Ovary (tissue), 10 donors: ENCODE measurements at regions of chr2 and their contacts with region 1.

Region 1: GRCh38 chr2:131673392-131674173 is 145.9 kb downstream of the CCDC74A start:
- DNase-seq: peak; percentile 66 to 83 (median 76)
- H3K4me3 ChIP-seq: peak overlapping the region; percentile 28
- H3K27ac ChIP-seq: no peak overlapping the region
- H3K4me1 ChIP-seq: peaks cover 8% of the 10 kb centered on the region
- H3K27me3 ChIP-seq: no peaks in the 10 kb centered on the region
- CTCF ChIP-seq: peak; percentile 59 to 76 (median 61)
- EP300 ChIP-seq: no peak
- POLR2A ChIP-seq: no peak

Region 2: DNA sequence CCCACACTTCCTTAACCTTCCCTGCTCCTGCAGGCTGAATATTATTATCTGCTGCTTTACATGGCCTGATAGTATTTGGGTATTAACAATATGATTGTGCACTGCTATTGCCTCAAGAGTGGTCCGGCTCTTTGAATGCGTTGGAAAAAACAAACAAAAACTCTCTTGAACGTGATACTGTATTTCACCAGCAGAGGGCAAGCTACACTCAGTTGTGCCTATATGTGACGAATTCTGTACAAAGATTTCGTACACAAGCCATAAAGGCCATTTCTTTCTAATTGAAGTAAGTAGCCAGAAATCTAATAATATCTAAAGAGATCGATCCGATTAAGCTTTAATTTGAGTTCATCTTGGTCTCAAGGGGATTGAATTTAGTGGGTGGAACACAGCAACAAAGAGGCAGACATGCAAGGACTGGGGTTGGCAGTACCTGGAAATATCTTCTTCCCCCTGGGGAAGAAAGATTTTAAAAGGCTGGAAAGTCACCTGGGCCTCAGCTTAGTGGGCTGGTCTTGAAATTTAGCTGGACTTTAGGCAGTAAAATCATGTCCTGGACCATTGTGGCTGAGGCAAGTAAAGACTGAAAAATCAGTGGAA is 260.3 kb before region 1 on chr2:
- intact Hi-C with region 1: loop called in 2 of 4 experiments (anchors 5 to 10 kb)
- DNase-seq: peak in 1 of 5 donors; percentile 28
- H3K4me3 ChIP-seq: no peak overlapping the region
- H3K27ac ChIP-seq: no peak overlapping the region
- H3K4me1 ChIP-seq: no peaks in the 10 kb centered on the region
- H3K27me3 ChIP-seq: no peaks in the 10 kb centered on the region
- CTCF ChIP-seq: peak; percentile 52 to 76 (median 63)
- EP300 ChIP-seq: no peak
- POLR2A ChIP-seq: no peak

Region 3: GRCh38 chr2:131801210-131801744 is 127.7 kb after region 1 on chr2:
- intact Hi-C with region 1: loop called in 1 of 4 experiments (anchors 10 kb)
- DNase-seq: peak in 2 of 5 donors; percentile 21 to 31
- H3K4me3 ChIP-seq: no peak overlapping the region
- H3K27ac ChIP-seq: no peak overlapping the region
- H3K4me1 ChIP-seq: peaks cover 2% of the 10 kb centered on the region
- H3K27me3 ChIP-seq: no peaks in the 10 kb centered on the region
- CTCF ChIP-seq: no peak
- EP300 ChIP-seq: no peak
- POLR2A ChIP-seq: no peak